CD4-positive, alpha-beta T cell (primary cell): ENCODE measurements at regions of chr1 and their contacts with region 1.

Region 1: GRCh38 chr1:2194898-2195673 is 514 bp upstream of the FAAP20 start:
- DNase-seq: peak; percentile 77 to 93 (median 86)
- ATAC-seq: peak; percentile 71
- H3K4me3 ChIP-seq: peak overlapping the region; percentile 57
- H3K4me3 Mint-ChIP-seq: peak overlapping the region; percentile 88
- H3K27ac ChIP-seq: peak overlapping the region; percentile 83 to 86
- H3K27ac Mint-ChIP-seq: peak overlapping the region; percentile 86
- H3K4me1 ChIP-seq: peaks cover 66% of the 10 kb centered on the region
- H3K4me1 Mint-ChIP-seq: peaks cover 13% of the 10 kb centered on the region
- H3K27me3 ChIP-seq: no peaks in the 10 kb centered on the region
- H3K27me3 Mint-ChIP-seq: no peaks in the 10 kb centered on the region
- CTCF ChIP-seq: peak; percentile 94

Region 2: GRCh38 chr1:2227346-2228153 is 32.5 kb after region 1 on chr1:
- CTCF ChIA-PET with region 1: interaction called, 25 read pairs
- POLR2A ChIA-PET with region 1: interaction called, 35 read pairs
- intact Hi-C with region 1: loop called (anchors 5 kb)
- DNase-seq: peak; percentile 86 to 98 (median 94)
- ATAC-seq: peak; percentile 70
- H3K4me3 ChIP-seq: peak overlapping the region; percentile 26
- H3K4me3 Mint-ChIP-seq: peak overlapping the region; percentile 88
- H3K27ac ChIP-seq: peak overlapping the region in 1 of 2 donors; percentile 46
- H3K27ac Mint-ChIP-seq: peak overlapping the region; percentile 82
- H3K4me1 ChIP-seq: peaks cover 50% of the 10 kb centered on the region
- H3K4me1 Mint-ChIP-seq: peaks cover 23% of the 10 kb centered on the region
- H3K27me3 ChIP-seq: no peaks in the 10 kb centered on the region
- H3K27me3 Mint-ChIP-seq: peaks cover 16% of the 10 kb centered on the region
- CTCF ChIP-seq: no peak

Region 3: DNA sequence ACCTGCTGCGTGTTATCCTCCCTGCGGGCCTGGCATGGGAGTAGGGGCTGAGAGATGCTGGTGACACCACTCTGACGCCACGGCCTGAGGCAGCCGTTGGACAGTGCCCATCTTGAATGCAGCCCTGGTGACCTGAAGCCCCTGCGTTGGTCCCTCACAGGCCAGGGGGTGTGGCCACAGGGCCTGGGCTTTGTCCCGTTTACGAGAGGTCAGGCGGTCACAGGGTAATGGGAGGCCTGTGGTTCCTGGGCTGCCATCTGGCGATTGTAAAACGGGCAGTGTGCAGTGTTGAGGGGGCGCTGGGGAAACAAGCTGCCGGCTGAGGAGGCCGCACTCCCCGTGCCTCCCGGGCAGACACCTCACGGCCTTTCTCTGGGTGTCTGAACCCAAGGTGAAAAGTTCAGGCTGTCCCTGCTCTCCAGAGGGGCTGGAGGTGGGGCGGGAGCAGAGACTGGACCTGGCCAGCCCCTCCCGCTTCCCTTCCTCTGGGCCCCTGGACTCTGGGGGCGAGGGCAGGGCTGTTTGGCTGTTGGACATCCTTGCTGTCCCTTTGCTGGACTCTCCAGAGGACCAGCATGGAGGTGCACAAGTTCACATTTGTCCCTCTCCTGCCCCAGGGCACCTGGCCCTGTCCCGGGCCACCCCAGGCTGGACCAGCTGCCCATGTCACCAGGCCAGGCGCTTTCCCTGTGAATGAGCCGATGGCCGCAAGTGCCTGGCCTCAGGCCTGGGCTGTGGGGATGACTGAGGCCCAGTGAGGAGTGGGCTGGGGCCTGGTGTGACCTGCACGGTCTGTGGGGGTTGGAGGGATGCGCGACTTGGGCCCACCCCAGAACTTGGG is 75.4 kb after region 1 on chr1:
- CTCF ChIA-PET with region 1: no interaction called
- POLR2A ChIA-PET with region 1: no interaction called
- intact Hi-C with region 1: no loop called
- DNase-seq: no peak
- ATAC-seq: no peak
- H3K4me3 ChIP-seq: no peak overlapping the region
- H3K4me3 Mint-ChIP-seq: no peak overlapping the region
- H3K27ac ChIP-seq: no peak overlapping the region
- H3K27ac Mint-ChIP-seq: peak overlapping the region; percentile 58
- H3K4me1 ChIP-seq: peaks cover 97% of the 10 kb centered on the region
- H3K4me1 Mint-ChIP-seq: peaks cover 68% of the 10 kb centered on the region
- H3K27me3 ChIP-seq: no peaks in the 10 kb centered on the region
- H3K27me3 Mint-ChIP-seq: no peaks in the 10 kb centered on the region
- CTCF ChIP-seq: no peak

Region 4: DNA sequence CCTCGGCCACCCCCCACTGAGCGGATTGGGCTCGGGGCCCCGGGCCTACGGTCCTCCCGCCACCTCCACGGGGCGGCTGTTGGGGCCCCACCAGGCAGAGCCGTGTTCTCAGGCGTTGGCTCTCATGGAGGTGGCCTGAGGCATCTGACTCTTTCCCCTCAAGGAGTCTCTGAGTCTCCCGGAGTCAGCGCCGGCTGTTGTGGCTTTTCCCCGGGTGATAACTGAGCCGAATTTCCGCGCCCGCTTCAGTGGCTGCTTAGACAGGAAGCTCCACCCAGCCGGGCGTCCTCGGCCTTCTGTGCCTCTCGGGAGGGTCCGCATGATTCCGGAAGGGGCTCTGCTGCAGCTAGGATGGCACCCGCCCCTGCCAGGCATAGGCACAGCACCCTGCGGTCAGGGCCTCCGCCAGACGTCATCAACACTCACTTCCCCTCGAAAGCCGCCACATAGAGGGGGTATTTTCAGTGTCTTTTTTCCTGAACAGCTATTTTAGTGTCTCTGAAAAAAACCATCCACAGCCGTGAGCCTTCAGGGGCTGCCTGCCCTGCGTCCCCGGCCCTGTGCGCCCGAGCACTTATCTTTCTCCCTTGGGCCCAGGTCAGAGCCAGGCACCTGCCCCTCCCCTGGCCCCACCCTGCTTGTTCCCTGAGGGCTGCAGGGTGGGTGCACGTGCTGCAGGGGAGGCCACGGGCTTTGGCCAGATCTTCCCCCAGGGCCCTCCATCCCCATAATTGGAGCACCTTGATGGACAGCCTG is 105.9 kb after region 1 on chr1:
- CTCF ChIA-PET with region 1: interaction called, 8 read pairs
- POLR2A ChIA-PET with region 1: interaction called, 17 read pairs
- intact Hi-C with region 1: no loop called
- DNase-seq: peak; percentile 86 to 99 (median 93)
- ATAC-seq: peak; percentile 76
- H3K4me3 ChIP-seq: peak overlapping the region; percentile 61
- H3K4me3 Mint-ChIP-seq: peak overlapping the region; percentile 91
- H3K27ac ChIP-seq: peak overlapping the region; percentile 97 to 98
- H3K27ac Mint-ChIP-seq: peak overlapping the region; percentile 99
- H3K4me1 ChIP-seq: peaks cover 72% of the 10 kb centered on the region
- H3K4me1 Mint-ChIP-seq: peaks cover 49% of the 10 kb centered on the region
- H3K27me3 ChIP-seq: no peaks in the 10 kb centered on the region
- H3K27me3 Mint-ChIP-seq: no peaks in the 10 kb centered on the region
- CTCF ChIP-seq: no peak

Region 5: DNA sequence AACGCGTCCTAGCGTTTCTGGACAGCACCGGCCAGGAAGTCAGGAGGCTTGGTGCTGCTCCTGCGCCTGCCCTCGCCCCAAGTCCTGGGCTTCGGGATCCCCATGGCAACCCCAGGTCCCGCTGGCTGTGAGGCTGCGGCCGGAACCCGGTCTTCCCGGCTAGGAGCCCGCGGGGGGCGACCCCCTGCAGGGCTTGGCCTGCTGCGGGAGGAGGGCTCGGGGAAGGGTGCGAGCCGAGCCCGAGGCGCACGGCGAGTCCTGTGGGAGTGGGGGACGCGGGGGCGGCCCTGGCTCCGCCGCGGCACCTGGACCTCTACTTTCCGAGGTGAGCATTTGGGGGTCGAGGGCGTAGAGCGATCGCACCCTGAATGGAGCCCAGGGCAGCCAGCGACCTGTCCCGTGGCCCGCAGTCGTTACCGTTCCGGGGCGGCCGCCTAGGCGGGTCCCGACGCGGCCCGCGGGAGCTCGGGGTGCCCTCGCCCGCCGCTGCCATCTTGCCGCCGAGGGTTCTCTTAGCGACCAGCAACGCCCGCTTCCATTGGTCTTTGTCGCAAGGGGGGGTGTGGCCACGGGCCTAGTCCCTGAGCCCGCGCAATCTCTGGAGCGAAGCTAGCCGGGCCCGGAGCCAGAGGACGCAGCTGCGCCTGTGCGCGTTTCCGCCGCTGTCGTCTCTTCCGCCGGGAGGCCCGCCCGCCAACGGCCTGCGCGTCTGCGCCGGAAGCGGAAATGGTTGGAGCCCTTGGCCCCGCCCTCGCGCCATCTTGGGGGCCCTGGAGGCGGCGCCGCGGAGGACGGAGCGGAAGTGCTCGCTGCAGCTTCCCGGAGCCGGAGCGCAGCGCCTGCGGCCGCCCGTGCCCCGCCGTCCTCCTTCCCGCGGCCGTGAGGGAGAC is 196.2 kb after region 1 on chr1 and contains the starts of genes MORN1 and RER1:
- CTCF ChIA-PET with region 1: interaction called, 13 read pairs
- POLR2A ChIA-PET with region 1: interaction called, 36 read pairs
- intact Hi-C with region 1: loop called in 1 of 2 experiments (anchors 2 kb)
- DNase-seq: peak; percentile 97 to 100 (median 99)
- ATAC-seq: peak; percentile 95
- H3K4me3 ChIP-seq: peak within 1 kb of the TSS; percentile 64
- H3K4me3 Mint-ChIP-seq: peak within 1 kb of the TSS; percentile 95
- H3K27ac ChIP-seq: peak within 1 kb of the TSS; percentile 60 to 63
- H3K27ac Mint-ChIP-seq: peak within 1 kb of the TSS; percentile 88
- H3K4me1 ChIP-seq: peaks cover 45% of the 10 kb centered on the region
- H3K4me1 Mint-ChIP-seq: peaks cover 31% of the 10 kb centered on the region
- H3K27me3 ChIP-seq: no peaks in the 10 kb centered on the region
- H3K27me3 Mint-ChIP-seq: no peaks in the 10 kb centered on the region
- CTCF ChIP-seq: no peak
- total RNA-seq, gene MORN1: 5.3 to 6.5 TPM
- total RNA-seq, gene RER1: 57.9 to 60.7 TPM

Region 6: GRCh38 chr1:2586154-2587070 is 391.3 kb after region 1 on chr1 and contains the start of gene PRXL2B:
- CTCF ChIA-PET with region 1: interaction called, 5 read pairs
- POLR2A ChIA-PET with region 1: interaction called, 6 read pairs
- intact Hi-C with region 1: loop called in 1 of 2 experiments (anchors 5 kb)
- DNase-seq: peak; percentile 92 to 99 (median 97)
- ATAC-seq: peak; percentile 61
- H3K4me3 ChIP-seq: peak within 1 kb of the TSS; percentile 85
- H3K4me3 Mint-ChIP-seq: peak within 1 kb of the TSS; percentile 99
- H3K27ac ChIP-seq: peak within 1 kb of the TSS; percentile 97 to 99
- H3K27ac Mint-ChIP-seq: peak within 1 kb of the TSS; percentile 98
- H3K4me1 ChIP-seq: peaks cover 62% of the 10 kb centered on the region
- H3K4me1 Mint-ChIP-seq: peaks cover 38% of the 10 kb centered on the region
- H3K27me3 ChIP-seq: no peaks in the 10 kb centered on the region
- H3K27me3 Mint-ChIP-seq: no peaks in the 10 kb centered on the region
- CTCF ChIP-seq: no peak
- total RNA-seq, gene PRXL2B: 11.0 to 12.8 TPM